Activated T-helper 1 cell treated with anti-CD3 and anti-CD28 coated beads, Interleukin-12 subunit alpha, Interleukin-12 subunit beta, Interleukin-2, Interleukin-4 antibody, amounts not matched to agents 30 ng/mL and 10 ng/mL and 1 ng/mL, durations not matched to agents 14 hours and 24 hours and 36 hours (primary cell): ENCODE measurements at regions of chr3 and their contacts with region 1.

Region 1: DNA sequence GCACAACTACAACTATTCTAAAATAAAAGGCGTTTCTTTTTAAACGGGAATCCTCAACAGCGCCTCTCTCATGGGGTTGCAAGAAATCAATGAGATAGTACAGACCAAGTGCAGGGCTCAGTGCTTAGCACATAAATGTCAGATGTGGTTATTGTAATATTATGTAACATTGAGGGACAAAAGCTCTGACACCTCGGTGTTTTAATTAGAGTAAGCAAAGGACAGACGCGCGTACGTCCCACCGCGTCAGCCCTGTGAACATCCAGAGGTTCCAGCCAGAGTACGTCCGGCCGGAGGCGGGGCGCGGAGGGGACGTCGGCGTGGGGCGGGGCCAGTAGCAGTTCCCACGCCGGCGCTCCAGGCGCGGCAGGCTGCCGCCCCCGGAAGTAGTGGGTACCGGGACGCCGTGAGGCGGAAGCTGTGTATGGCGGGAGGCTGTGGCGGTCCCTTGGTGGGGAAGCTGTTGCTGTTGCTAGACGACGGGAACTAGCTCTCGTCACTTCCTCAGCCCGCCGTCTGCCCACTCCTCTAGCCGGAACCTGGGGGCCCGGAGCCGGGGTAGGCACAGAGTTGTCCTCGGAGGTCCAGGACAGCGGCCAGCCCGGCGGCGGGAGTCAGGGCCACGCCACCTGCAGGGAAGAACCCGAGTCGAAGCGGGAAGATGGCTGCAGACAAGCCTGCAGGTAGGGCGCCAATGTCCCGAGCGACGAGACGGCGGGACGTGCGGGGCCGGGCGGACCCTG is at the start of gene CNOT10:
- DNase-seq: peak; percentile 96
- H3K4me3 Mint-ChIP-seq: peak within 1 kb of the TSS; percentile 94
- H3K27ac Mint-ChIP-seq: peak within 1 kb of the TSS; percentile 89
- H3K4me1 Mint-ChIP-seq: peaks cover 30% of the 10 kb centered on the region
- H3K27me3 Mint-ChIP-seq: peaks cover 2% of the 10 kb centered on the region
- total RNA-seq, gene CNOT10: 55.5 and 71.3 TPM in 2 replicates

Region 2: GRCh38 chr3:32238453-32239306 is 446.3 kb before region 1 on chr3 and contains the start of gene CMTM8:
- intact Hi-C with region 1: loop called (anchors 5 kb)
- DNase-seq: peak; percentile 54
- H3K4me3 Mint-ChIP-seq: peak within 1 kb of the TSS; percentile 86
- H3K27ac Mint-ChIP-seq: peak within 1 kb of the TSS; percentile 53
- H3K4me1 Mint-ChIP-seq: peaks cover 25% of the 10 kb centered on the region
- H3K27me3 Mint-ChIP-seq: peaks cover 31% of the 10 kb centered on the region
- total RNA-seq, gene CMTM8: 5.0 and 5.7 TPM in 2 replicates

Region 3: GRCh38 chr3:32428092-32429068 is 256.6 kb before region 1 on chr3:
- intact Hi-C with region 1: loop called (anchors 1 kb)
- DNase-seq: no peak
- H3K4me3 Mint-ChIP-seq: peak overlapping the region; percentile 63
- H3K27ac Mint-ChIP-seq: peak overlapping the region; percentile 87
- H3K4me1 Mint-ChIP-seq: peaks cover 88% of the 10 kb centered on the region
- H3K27me3 Mint-ChIP-seq: no peaks in the 10 kb centered on the region

Region 4: GRCh38 chr3:32570421-32571191 is 114.4 kb before region 1 on chr3 and contains the start of gene DYNC1LI1:
- intact Hi-C with region 1: loop called (anchors 1 kb)
- DNase-seq: peak; percentile 90
- H3K4me3 Mint-ChIP-seq: peak within 1 kb of the TSS; percentile 91
- H3K27ac Mint-ChIP-seq: peak within 1 kb of the TSS; percentile 88
- H3K4me1 Mint-ChIP-seq: peaks cover 22% of the 10 kb centered on the region
- H3K27me3 Mint-ChIP-seq: no peaks in the 10 kb centered on the region
- total RNA-seq, gene DYNC1LI1: 35.9 and 43.3 TPM in 2 replicates

Region 5: GRCh38 chr3:33023172-33024136 is 338.5 kb after region 1 on chr3:
- intact Hi-C with region 1: loop called (anchors 1 kb)
- DNase-seq: no peak
- H3K4me3 Mint-ChIP-seq: peak overlapping the region; percentile 28
- H3K27ac Mint-ChIP-seq: peak overlapping the region; percentile 94
- H3K4me1 Mint-ChIP-seq: peaks cover 56% of the 10 kb centered on the region
- H3K27me3 Mint-ChIP-seq: peaks cover 1% of the 10 kb centered on the region

Region 6: GRCh38 chr3:33113772-33114621 is 429.0 kb after region 1 on chr3 and contains the start of gene CRTAP:
- intact Hi-C with region 1: loop called (anchors 2 kb)
- DNase-seq: peak; percentile 78
- H3K4me3 Mint-ChIP-seq: peak within 1 kb of the TSS; percentile 87
- H3K27ac Mint-ChIP-seq: peak within 1 kb of the TSS; percentile 74
- H3K4me1 Mint-ChIP-seq: peaks cover 26% of the 10 kb centered on the region
- H3K27me3 Mint-ChIP-seq: no peaks in the 10 kb centered on the region
- total RNA-seq, gene CRTAP: 30.3 and 33.2 TPM in 2 replicates